ENCODE measurements at regions of chr1 and their contacts with region 1.

Region 1: DNA sequence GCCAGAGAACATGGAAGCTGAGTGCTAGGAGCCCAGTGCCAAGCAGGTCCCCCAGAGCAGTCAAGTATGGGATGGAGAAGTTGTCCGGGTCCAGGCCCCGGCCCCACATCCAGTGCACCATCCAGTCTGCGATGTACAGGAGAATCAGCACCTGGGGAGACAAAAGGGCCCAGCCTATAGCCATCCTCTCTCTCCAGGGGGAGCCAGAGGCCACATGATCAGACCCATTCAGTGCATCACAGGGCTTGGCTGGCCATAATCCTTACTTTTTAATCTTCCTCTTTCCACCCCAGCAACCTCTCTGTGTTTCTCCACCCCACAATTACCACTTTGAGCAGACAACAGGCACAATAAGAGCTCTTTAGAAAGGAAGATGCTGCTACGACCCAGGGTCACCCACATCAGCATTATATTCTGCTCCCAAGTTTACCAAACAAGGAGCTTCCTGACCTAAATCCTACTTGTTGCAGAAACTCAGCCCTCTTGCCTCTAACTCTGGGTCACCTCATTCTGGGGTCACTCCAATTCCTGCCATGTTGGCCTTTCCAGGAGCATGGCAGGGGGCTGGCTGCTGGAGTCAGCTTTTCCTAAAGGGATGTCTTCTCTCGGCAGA is 16.4 kb upstream of the RAB29 start:
- DNase-seq: peak; percentile 46
- ATAC-seq: peak; percentile 65
- H3K4me3 Mint-ChIP-seq: no peak overlapping the region
- H3K27ac Mint-ChIP-seq: peak overlapping the region; percentile 63
- H3K4me1 Mint-ChIP-seq: peaks cover 37% of the 10 kb centered on the region
- H3K27me3 Mint-ChIP-seq: no peaks in the 10 kb centered on the region
- CTCF ChIP-seq: no peak

Region 2: DNA sequence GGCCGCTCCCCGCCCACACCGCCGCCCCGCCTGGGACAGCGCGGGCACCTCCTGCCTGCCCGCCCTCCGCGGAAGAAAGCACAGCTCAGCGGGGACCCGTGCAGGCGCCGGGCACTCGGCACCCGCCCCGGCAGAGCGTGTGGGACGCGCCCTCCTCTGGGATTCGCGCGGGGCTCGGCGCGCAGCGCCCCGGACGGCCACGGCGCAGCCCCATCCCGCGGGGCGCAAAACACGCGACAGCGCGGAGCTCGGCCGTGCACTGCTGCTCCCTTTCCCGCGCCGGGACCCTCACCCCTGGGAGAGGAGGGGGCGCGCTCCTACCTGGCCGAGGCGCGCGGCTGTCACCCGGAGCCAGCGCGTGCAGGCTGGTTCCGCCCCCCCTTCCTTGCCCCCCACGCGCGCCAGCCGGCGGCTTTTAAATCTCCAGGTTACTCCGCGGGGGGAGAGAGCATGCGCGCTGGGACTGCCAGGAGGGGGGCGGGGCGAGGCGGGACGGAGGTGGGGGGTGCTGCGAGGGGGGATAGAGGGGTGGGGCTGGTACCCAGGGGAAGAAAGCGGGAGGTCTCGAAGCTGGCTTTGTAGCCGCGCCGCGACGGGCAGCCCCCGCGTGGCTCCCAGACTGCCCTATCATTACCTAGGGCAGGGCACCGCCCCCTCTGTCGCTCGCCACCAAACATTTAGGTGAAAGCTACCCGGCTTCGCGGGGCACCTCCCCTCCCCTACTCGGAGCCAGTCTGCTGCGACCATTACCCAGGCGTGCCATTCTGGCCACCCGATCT is 111.4 kb before region 1 on chr1 and contains the start of gene SLC45A3:
- CTCF ChIA-PET with region 1: no interaction called
- POLR2A ChIA-PET with region 1: no interaction called
- intact Hi-C with region 1: no loop called
- DNase-seq: no peak
- ATAC-seq: peak; percentile 75
- H3K4me3 Mint-ChIP-seq: peak within 1 kb of the TSS; percentile 85
- H3K27ac Mint-ChIP-seq: peak within 1 kb of the TSS; percentile 46
- H3K4me1 Mint-ChIP-seq: peaks cover 26% of the 10 kb centered on the region
- H3K27me3 Mint-ChIP-seq: peaks cover 2% of the 10 kb centered on the region
- CTCF ChIP-seq: no peak
- total RNA-seq, gene SLC45A3: 6.9 and 7.4 TPM in 2 replicates

Region 3: DNA sequence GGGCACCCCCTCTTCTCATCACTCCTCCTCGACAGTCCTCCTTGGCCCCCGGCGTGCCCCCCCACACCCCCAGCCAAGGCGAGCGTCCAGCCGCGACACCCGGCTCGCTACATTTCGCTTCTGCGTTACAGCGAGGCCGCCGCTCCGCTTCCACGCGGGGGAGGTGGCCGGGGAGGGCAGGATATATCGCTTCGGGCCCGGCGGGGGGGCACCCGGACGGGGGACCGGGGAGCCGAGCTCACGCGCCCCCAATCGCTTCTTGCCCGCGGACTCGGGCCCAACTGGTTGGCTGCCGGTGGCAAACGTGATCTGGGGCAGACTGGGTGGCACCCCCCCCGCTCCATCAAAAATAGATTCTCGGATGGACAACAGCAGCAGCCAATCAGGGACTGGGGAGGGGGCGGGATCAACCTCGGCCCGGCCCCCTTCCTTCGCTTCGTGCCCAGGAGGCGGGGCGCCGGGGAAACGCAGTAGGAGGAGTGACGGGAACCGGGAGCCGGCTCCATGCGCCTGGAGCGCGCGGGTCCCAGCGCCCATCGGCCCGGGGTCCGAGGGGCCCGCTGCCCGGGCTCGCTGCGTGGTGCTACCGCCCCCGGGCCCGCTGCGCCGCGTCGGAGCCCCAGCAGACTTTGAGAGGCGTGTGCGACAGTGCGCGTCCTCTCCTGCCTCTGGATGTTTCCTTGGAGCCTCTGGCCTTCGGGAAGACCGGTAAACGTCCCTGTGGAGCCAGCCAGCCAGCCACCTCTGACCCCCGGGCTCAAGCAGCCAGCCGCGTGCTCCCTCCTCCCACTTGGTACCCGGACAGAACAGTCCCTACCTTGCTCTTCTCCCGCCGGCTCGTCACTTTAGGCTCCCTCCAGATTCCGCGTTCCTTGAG is 21.4 kb after region 1 on chr1 and contains the start of gene SLC41A1:
- CTCF ChIA-PET with region 1: interaction called, 6 read pairs
- POLR2A ChIA-PET with region 1: interaction called, 12 read pairs
- intact Hi-C with region 1: loop called (anchors 2 kb)
- DNase-seq: peak; percentile 78
- ATAC-seq: peak; percentile 96
- H3K4me3 Mint-ChIP-seq: peak within 1 kb of the TSS; percentile 95
- H3K27ac Mint-ChIP-seq: peak within 1 kb of the TSS; percentile 83
- H3K4me1 Mint-ChIP-seq: peaks cover 52% of the 10 kb centered on the region
- H3K27me3 Mint-ChIP-seq: no peaks in the 10 kb centered on the region
- CTCF ChIP-seq: no peak
- total RNA-seq, gene SLC41A1: 31.2 and 32.4 TPM in 2 replicates

Region 4: DNA sequence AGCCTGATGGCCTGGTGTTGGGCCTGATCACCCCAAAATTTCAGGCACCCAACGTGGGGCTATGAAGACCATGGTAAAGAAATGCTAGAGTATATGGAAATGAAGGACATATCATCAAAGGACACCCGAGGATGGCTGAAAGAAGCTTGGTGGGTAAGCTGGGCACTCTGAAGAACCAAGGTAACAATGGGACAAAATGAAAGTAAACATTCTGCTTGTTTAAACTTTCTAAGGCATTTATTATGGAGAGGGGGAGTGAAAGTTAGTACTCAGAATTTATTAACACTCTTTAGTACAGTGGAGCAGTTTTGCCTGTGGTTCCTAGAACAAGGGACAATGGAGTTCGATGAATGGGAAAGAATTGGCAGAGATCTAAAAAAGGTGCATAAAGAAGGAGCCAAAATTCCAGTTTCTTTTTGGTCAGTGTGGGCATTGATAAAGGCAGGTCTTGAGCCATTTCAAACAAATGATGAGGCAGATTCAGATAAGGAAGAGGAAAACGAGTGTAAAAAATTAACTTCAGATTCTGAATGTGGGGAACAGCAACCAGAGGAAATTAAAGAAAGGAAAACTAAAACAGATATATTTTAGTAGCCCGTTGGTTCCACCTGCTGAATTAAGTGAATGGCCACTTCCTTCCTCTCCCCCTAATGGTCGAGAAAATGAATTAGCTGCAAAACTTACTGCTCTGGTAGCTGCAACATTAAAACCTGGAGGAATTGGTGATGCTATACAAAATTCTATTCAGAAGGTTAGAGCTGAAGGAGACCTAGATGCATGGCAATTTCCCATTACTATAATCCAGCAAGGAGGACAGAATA is 66.7 kb after region 1 on chr1:
- CTCF ChIA-PET with region 1: interaction called, 6 read pairs
- POLR2A ChIA-PET with region 1: interaction called, 3 read pairs
- intact Hi-C with region 1: loop called (anchors 1 kb)
- DNase-seq: no peak
- ATAC-seq: no peak
- H3K4me3 Mint-ChIP-seq: peak overlapping the region; percentile 21
- H3K27ac Mint-ChIP-seq: peak overlapping the region; percentile 19
- H3K4me1 Mint-ChIP-seq: peaks cover 33% of the 10 kb centered on the region
- H3K27me3 Mint-ChIP-seq: no peaks in the 10 kb centered on the region
- CTCF ChIP-seq: no peak

Region 5: DNA sequence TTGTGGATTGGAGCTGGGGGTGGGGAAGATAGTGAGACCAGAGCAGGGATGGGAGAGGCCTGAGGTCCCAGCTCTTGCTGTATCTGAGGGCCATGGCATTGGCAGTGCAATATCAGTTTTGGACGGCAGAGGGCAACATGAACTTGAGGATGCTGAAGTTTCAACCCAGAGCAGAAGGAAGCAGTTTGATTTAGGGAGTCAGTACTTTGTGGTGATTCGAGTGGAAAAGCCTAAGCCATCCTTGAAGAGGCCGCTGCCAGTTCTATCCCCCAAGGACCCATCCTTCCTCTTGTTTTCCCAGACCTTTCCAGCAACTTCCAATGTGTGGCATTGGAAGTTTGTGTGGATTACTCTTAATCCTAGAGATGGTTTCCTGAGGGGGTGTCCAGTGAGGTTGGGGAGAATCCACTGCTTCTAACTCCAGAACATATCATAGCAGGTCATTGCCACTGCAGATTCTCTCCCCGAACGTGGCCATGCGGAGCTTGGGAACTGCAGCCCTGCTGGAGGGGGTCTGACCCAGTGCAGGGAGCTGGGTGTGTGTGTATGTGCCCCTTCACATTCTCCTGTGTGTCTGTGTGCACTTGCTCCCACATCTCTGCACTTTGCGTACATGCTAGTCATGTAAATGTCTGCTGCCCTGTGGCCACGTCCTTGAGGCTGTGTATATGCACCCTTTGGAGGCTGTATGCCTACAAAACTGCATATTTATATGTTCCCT is 127.5 kb after region 1 on chr1:
- CTCF ChIA-PET with region 1: interaction called, 10 read pairs
- POLR2A ChIA-PET with region 1: interaction called, 3 read pairs
- intact Hi-C with region 1: loop called (anchors 1 kb)
- DNase-seq: peak; percentile 58
- ATAC-seq: peak; percentile 93
- H3K4me3 Mint-ChIP-seq: no peak overlapping the region
- H3K27ac Mint-ChIP-seq: no peak overlapping the region
- H3K4me1 Mint-ChIP-seq: no peaks in the 10 kb centered on the region
- H3K27me3 Mint-ChIP-seq: peaks cover 5% of the 10 kb centered on the region
- CTCF ChIP-seq: no peak

Region 6: DNA sequence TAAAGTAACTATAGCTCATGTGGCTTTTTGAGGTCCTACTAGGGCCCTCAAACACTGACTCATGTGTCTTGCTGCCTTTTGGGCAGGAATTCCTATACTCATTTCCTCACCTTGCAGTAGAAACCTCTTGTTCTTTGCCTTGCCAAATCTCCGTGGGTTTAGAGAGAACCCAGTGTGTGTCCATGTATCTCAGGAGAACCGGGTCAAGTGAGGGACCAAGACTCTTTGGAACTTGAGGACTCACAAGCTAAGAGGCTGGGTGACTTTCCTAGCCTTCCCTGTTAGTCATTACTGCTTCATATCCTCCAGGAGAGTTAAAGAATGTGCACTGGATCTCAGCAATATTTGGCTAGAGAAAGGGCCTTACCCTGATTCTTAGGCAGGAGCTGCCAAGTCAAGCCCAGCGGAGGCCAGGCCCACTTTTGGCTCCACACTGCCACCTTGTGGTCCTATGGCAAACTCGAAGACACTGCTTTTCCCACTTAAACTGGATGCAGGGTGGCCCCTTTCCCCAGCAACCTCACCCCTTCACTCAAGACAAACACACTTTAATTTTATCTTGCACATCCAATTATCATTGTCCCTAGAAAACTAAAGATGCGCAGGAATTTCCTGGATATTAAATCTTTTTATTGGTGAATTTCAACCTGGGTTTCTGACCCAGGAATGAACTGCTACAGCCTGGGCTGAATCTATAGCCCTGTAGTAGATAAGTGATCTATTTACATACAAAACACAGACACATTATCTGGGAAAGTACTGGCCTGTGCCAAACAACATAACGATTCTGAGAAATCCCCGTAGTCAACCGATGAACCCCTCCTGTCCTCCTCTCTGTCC is 314.9 kb after region 1 on chr1:
- CTCF ChIA-PET with region 1: interaction called, 7 read pairs
- POLR2A ChIA-PET with region 1: no interaction called
- intact Hi-C with region 1: loop called (anchors 1 kb)
- DNase-seq: peak; percentile 71
- ATAC-seq: peak; percentile 89
- H3K4me3 Mint-ChIP-seq: no peak overlapping the region
- H3K27ac Mint-ChIP-seq: peak overlapping the region; percentile 73
- H3K4me1 Mint-ChIP-seq: peaks cover 34% of the 10 kb centered on the region
- H3K27me3 Mint-ChIP-seq: no peaks in the 10 kb centered on the region
- CTCF ChIP-seq: peak; percentile 70